Prostate gland (tissue), 2 donors: ENCODE measurements at regions of chr3 and their contacts with region 1.

Region 1: GRCh38 chr3:184314363-184314699 is at the start of gene EIF4G1:
- DNase-seq: peak; percentile 93
- H3K4me3 ChIP-seq: peak within 1 kb of the TSS; percentile 59 to 67
- H3K27ac ChIP-seq: peak within 1 kb of the TSS; percentile 93 to 96
- H3K4me1 ChIP-seq: peaks cover 14% of the 10 kb centered on the region
- H3K27me3 ChIP-seq: no peaks in the 10 kb centered on the region
- CTCF ChIP-seq: no peak
- POLR2A ChIP-seq: peak; percentile 71
- total RNA-seq, gene EIF4G1: 331 to 370 TPM

Region 2: DNA sequence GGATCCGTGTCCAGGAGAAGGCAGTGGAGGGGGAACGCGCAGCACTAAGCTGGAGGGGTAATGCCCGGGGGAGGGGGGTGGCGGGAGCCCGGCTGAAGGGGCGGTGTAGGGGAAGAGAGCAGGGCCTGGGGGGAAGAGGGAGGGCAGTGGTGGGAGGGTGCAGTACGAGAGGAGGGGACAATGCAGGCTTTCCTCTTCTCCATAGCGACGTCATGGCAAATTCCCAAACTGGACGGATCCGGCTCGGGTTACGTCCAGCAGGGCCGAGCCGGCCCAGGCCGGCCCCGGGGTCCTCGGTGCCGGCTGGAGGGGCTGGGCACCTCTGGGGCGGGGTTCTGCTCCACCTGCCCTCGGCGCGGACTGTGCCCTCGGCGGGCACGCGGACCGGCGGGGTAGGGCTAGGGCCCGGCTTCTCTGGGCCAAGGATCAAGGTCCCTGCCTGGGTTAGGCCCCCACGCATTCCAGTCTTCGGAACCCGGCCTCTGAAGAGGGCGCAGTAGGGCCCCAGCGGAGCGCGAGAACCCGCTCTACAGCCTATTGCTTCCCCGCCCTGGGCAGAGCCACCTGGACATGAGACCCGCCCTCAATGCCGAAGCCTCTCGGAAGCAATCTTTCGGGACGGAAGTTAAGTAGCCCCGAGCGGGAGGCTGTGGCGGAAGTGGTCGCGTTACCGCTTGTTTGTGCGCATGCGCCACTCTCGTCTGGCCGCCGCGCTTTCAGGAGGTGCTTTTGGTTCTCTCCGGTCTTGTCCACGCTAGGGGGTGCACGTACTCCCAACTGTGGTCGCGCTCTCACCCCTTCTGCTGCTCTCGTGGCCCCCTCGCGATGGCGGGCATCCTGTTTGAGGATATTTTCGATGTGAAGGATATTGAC is 48.6 kb after region 1 on chr3:
- intact Hi-C with region 1: loop called (anchors 5 kb)
- DNase-seq: peak; percentile 97
- H3K4me3 ChIP-seq: peak overlapping the region; percentile 64 to 71
- H3K27ac ChIP-seq: peak overlapping the region; percentile 94 to 97
- H3K4me1 ChIP-seq: peaks cover 3% of the 10 kb centered on the region
- H3K27me3 ChIP-seq: no peaks in the 10 kb centered on the region
- CTCF ChIP-seq: peak in 3 of 4 experiments; percentile 59 to 67 (median 66)
- POLR2A ChIP-seq: peak; percentile 81